Endothelial cell of umbilical vein (primary cell): ENCODE measurements at regions of chr14 and their contacts with region 1.

Region 1: DNA sequence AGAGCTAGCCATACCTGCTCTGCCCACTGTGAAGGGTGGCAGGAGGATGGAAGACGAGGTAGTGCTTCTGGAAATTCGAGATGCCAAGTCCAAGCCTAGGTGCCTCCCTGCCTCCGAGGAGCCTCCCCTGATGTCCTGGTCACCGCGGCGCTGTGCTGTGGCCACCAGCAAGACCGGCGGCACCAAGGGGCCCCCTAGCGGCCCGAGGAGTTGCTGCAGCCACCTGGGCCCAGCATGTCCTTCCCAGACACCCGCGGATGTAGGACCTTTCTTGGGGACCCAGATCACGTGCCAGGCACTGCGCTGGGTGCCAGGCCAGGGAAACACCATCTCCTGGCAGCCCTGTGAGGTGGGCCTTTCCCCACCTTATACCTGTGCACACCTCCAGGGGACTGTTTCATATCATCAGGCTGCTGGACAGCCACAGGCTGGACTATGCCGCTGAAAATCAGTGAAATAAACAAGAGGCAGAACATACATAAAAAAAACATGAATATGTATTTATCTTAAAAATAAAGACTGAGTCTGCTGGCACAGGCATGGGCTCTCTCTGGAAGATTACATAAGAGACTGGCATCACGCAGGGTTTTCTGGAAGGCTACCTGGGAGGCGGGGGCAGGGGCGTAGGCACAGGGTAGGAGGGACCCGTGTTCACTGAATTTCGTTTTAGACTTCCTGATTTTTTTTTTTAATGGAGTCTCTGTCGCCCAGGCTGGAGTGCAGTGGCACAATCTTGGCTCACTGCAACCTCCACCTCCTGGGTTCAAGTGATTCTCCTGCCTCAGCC is 15.9 kb upstream of the HHIPL1 start:
- DNase-seq: peak; percentile 69
- H3K4me3 ChIP-seq: no peak overlapping the region
- H3K27ac ChIP-seq: no peak overlapping the region
- H3K4me1 ChIP-seq: no peaks in the 10 kb centered on the region
- H3K27me3 ChIP-seq: no peaks in the 10 kb centered on the region
- CTCF ChIP-seq: peak; percentile 97 to 99
- POLR2A ChIP-seq: no peak

Region 2: GRCh38 chr14:99393047-99393655 is 235.9 kb before region 1 on chr14:
- CTCF ChIA-PET with region 1: interaction called, 4 read pairs
- POLR2A ChIA-PET with region 1: no interaction called
- dilution Hi-C with region 1: no loop called
- intact Hi-C with region 1: loop called (anchors 5 kb)
- DNase-seq: peak; percentile 13
- H3K4me3 ChIP-seq: no peak overlapping the region
- H3K27ac ChIP-seq: no peak overlapping the region
- H3K4me1 ChIP-seq: peaks cover 19% of the 10 kb centered on the region
- H3K27me3 ChIP-seq: no peaks in the 10 kb centered on the region
- CTCF ChIP-seq: peak; percentile 79 to 80
- POLR2A ChIP-seq: no peak

Region 3: DNA sequence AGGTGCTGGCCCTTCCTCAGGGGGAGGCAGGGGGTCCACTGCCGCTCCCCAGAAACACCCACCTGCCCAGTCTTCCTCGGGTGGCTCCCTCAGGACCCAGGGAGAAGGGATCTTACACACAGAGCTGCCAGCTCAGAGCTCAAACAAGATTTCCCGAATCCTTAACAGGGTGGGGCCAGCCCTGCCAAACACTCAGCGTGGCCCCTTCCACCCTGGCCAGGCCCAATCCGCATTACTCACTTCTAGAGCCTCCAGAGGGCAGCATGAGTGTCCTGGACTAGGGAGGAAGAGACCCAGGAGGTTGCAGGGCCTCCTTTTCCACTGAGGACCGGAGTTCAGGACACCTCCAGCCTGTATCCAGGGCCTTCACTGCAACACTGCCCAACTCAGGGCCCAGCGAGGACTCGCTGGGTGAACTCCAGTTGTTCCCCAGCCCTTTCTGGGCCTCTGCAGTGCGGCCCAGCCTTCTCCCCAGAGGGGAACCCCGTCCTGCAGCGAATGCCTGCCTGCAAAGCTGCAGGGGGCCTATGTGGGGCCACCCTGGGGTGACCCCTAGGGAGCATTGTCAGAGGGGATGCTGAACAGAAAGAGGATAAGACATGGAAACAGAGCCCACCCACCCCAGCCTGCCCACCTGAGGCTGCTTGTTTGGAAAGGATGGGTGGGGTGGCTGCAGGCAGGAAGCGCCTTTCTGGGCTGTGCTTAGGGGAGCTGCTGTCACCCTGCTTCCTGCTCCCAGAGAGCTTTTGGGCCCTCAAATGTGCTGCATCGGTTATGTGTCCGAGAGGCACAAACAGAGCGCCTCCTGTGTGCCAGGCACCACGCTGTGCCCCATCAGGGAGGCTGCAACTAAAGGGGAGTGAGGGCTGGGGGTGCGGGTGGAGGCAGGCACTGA is 104.0 kb before region 1 on chr14:
- CTCF ChIA-PET with region 1: interaction called, 52 read pairs
- POLR2A ChIA-PET with region 1: no interaction called
- dilution Hi-C with region 1: no loop called
- intact Hi-C with region 1: loop called (anchors 2 kb)
- DNase-seq: peak; percentile 24
- H3K4me3 ChIP-seq: no peak overlapping the region
- H3K27ac ChIP-seq: no peak overlapping the region
- H3K4me1 ChIP-seq: peaks cover 15% of the 10 kb centered on the region
- H3K27me3 ChIP-seq: no peaks in the 10 kb centered on the region
- CTCF ChIP-seq: peak in 1 of 2 donors; percentile 13
- POLR2A ChIP-seq: no peak

Region 4: GRCh38 chr14:99563233-99564129 is 65.5 kb before region 1 on chr14:
- CTCF ChIA-PET with region 1: interaction called, 11 read pairs
- POLR2A ChIA-PET with region 1: no interaction called
- dilution Hi-C with region 1: no loop called
- intact Hi-C with region 1: loop called (anchors 1 kb)
- DNase-seq: peak; percentile 77
- H3K4me3 ChIP-seq: no peak overlapping the region
- H3K27ac ChIP-seq: no peak overlapping the region
- H3K4me1 ChIP-seq: peaks cover 5% of the 10 kb centered on the region
- H3K27me3 ChIP-seq: no peaks in the 10 kb centered on the region
- CTCF ChIP-seq: peak; percentile 46 to 70
- POLR2A ChIP-seq: no peak

Region 5: GRCh38 chr14:99590712-99591555 is 38.1 kb before region 1 on chr14:
- CTCF ChIA-PET with region 1: interaction called, 7 read pairs
- POLR2A ChIA-PET with region 1: no interaction called
- dilution Hi-C with region 1: no loop called
- intact Hi-C with region 1: loop called (anchors 1 kb)
- DNase-seq: peak; percentile 85
- H3K4me3 ChIP-seq: no peak overlapping the region
- H3K27ac ChIP-seq: no peak overlapping the region
- H3K4me1 ChIP-seq: peaks cover 19% of the 10 kb centered on the region
- H3K27me3 ChIP-seq: no peaks in the 10 kb centered on the region
- CTCF ChIP-seq: peak in 1 of 2 donors; percentile 10
- POLR2A ChIP-seq: no peak

Region 6: DNA sequence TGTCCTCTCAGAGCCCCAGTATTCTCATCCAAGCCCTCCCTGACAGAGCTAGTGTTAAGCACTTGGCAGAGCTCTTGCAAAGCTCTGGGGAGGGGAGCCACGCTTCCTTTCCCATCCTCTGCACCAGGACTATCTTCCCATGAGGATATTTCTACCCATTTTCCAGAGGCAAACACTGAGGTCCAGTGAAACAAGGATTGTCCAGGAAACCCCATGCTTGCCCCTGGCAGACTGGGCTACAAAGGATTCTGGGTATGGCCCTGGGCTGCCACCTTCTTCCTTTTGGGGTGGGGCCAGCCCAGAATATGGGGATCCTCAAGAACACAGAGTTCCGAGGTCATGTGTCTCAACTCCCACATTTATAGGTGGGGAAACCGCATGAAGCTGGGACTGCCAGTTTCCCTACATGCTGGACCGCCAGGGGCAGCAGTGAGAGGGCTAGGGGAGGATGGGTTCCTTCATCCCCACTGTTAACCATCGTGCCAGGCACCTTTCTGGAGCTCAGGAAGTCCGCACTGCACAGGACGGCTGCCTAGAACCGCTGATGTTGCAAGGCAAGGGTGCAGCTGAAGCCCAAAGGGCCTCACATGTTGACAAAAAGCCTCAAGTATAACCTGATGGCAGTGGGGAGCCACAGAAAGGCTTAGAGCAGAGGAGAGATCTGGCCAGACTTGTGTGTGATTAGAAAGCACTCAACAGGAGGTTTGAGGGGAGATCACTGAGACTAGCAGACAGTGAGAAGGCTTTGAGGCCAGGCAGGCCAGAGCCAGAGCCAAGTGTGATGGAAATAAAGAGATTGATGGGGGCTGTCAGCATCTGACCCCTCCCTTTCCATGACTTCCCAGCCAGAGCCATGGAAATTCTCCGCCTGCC is 19.5 kb before region 1 on chr14:
- CTCF ChIA-PET with region 1: interaction called, 18 read pairs
- POLR2A ChIA-PET with region 1: no interaction called
- dilution Hi-C with region 1: no loop called
- intact Hi-C with region 1: loop called (anchors 1 kb)
- DNase-seq: no peak
- H3K4me3 ChIP-seq: no peak overlapping the region
- H3K27ac ChIP-seq: no peak overlapping the region
- H3K4me1 ChIP-seq: no peaks in the 10 kb centered on the region
- H3K27me3 ChIP-seq: no peaks in the 10 kb centered on the region
- CTCF ChIP-seq: peak in 1 of 2 donors; percentile 33
- POLR2A ChIP-seq: no peak